ENCODE measurements at regions of chr5 and their contacts with region 1.

Region 1: DNA sequence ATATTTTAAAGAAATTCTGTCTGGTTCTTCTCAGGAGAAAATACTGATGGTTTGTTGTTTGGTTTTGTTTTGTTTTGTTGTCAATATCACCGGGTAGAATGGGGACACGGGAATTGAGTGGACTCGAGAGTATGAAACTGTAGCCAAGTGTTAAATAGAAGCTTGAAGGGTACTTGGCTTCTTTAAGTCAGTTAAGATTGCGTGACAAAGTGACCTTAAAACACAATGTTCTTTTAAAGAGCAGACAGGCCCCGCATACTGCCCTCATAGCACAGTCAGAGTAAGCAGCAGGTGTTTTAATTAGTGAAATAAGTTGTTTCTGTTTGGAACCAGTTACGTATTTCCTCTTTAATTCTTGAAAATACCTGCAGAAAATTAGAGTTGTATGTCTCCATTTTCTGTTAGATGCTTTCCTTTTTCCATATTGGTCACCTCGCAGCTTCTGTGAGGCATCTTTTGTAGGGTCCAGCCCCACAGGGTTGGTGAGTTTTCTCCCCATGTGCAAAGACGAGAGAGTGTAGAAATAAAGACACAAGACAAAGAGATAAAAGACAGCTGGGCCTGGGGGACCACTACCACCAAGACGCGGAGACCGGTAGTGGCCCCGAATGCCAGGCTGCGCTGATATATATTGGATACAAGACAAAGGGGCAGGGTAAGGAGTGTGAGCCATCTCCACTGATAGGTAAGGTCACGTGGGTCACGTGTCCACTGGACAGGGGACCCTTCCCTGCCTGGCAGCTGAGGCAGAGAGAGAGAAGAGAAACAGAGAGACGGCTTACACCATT is 9.6 kb downstream of the TRIP13 start:
- DNase-seq: no peak
- H3K4me3 Mint-ChIP-seq: no peak overlapping the region
- H3K27ac Mint-ChIP-seq: no peak overlapping the region
- H3K4me1 Mint-ChIP-seq: no peaks in the 10 kb centered on the region
- H3K27me3 Mint-ChIP-seq: no peaks in the 10 kb centered on the region

Region 2: GRCh38 chr5:671459-672328 is 230.6 kb before region 1 on chr5:
- CTCF ChIA-PET with region 1: interaction called, 16 read pairs
- DNase-seq: peak; percentile 74
- H3K4me3 Mint-ChIP-seq: no peak overlapping the region
- H3K27ac Mint-ChIP-seq: no peak overlapping the region
- H3K4me1 Mint-ChIP-seq: peaks cover 4% of the 10 kb centered on the region
- H3K27me3 Mint-ChIP-seq: peaks cover 33% of the 10 kb centered on the region

Region 3: DNA sequence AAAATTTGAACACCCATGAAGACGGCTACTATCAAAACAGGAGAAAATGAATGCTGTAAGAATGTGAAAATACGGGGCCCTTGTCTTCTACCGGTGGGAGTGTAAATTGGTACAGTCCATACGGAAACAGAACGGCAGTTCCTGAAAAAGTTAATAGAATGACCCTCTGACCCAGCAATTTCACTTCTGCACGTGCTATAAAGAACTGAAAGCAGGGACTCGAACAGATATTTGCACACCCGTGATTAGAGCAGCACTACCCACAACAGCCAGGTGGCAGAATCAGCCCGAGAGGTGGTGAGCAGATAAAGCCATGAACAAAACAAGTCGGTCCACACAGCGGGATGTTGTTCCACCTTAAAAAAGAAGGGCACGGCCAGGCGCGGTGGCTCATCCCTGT is 232.2 kb after region 1 on chr5:
- CTCF ChIA-PET with region 1: no interaction called
- DNase-seq: no peak
- H3K4me3 Mint-ChIP-seq: no peak overlapping the region
- H3K27ac Mint-ChIP-seq: no peak overlapping the region
- H3K4me1 Mint-ChIP-seq: peaks cover 7% of the 10 kb centered on the region
- H3K27me3 Mint-ChIP-seq: peaks cover 39% of the 10 kb centered on the region